CD4-positive, alpha-beta memory T cell (primary cell): ENCODE measurements at regions of chr14 and their contacts with region 1.

Region 1: GRCh38 chr14:23379366-23380196 is 2.7 kb downstream of the CMTM5 start:
- DNase-seq: peak; percentile 54 to 67 (median 65)
- H3K4me3 ChIP-seq: no peak overlapping the region
- H3K4me3 Mint-ChIP-seq: no peak overlapping the region
- H3K27ac ChIP-seq: no peak overlapping the region
- H3K27ac Mint-ChIP-seq: peak overlapping the region in 1 of 7 donors; percentile 4
- H3K4me1 ChIP-seq: no peaks in the 10 kb centered on the region
- H3K4me1 Mint-ChIP-seq: no peaks in the 10 kb centered on the region
- H3K27me3 ChIP-seq: no peaks in the 10 kb centered on the region
- H3K27me3 Mint-ChIP-seq: peaks cover 5 to 11% of the 10 kb centered on the region in 2 donors

Region 2: GRCh38 chr14:23047034-23047634 is 332.4 kb before region 1 on chr14:
- CTCF ChIA-PET with region 1: no interaction called
- POLR2A ChIA-PET with region 1: no interaction called
- intact Hi-C with region 1: no loop called
- DNase-seq: no peak
- H3K4me3 ChIP-seq: no peak overlapping the region
- H3K4me3 Mint-ChIP-seq: no peak overlapping the region
- H3K27ac ChIP-seq: no peak overlapping the region
- H3K27ac Mint-ChIP-seq: no peak overlapping the region
- H3K4me1 ChIP-seq: no peaks in the 10 kb centered on the region
- H3K4me1 Mint-ChIP-seq: no peaks in the 10 kb centered on the region
- H3K27me3 ChIP-seq: no peaks in the 10 kb centered on the region
- H3K27me3 Mint-ChIP-seq: no peaks in the 10 kb centered on the region

Region 3: GRCh38 chr14:23068476-23069412 is 310.8 kb before region 1 on chr14:
- CTCF ChIA-PET with region 1: interaction called, 5 read pairs
- POLR2A ChIA-PET with region 1: no interaction called
- intact Hi-C with region 1: loop called (anchors 2 kb)
- DNase-seq: peak; percentile 77 to 81 (median 78)
- H3K4me3 ChIP-seq: no peak overlapping the region
- H3K4me3 Mint-ChIP-seq: peak overlapping the region in 7 of 8 donors; percentile 34 to 74 (median 61)
- H3K27ac ChIP-seq: no peak overlapping the region
- H3K27ac Mint-ChIP-seq: peak overlapping the region; percentile 34 to 93 (median 87)
- H3K4me1 ChIP-seq: peaks cover 28% of the 10 kb centered on the region
- H3K4me1 Mint-ChIP-seq: peaks cover 19 to 41% (median 32%) of the 10 kb centered on the region in 4 donors
- H3K27me3 ChIP-seq: no peaks in the 10 kb centered on the region
- H3K27me3 Mint-ChIP-seq: no peaks in the 10 kb centered on the region

Region 4: GRCh38 chr14:23269193-23269592 is 110.4 kb before region 1 on chr14:
- CTCF ChIA-PET with region 1: interaction called, 36 read pairs
- POLR2A ChIA-PET with region 1: no interaction called
- intact Hi-C with region 1: no loop called
- DNase-seq: no peak
- H3K4me3 ChIP-seq: no peak overlapping the region
- H3K4me3 Mint-ChIP-seq: no peak overlapping the region
- H3K27ac ChIP-seq: no peak overlapping the region
- H3K27ac Mint-ChIP-seq: no peak overlapping the region
- H3K4me1 ChIP-seq: no peaks in the 10 kb centered on the region
- H3K4me1 Mint-ChIP-seq: no peaks in the 10 kb centered on the region
- H3K27me3 ChIP-seq: no peaks in the 10 kb centered on the region
- H3K27me3 Mint-ChIP-seq: peaks cover 1 to 7% of the 10 kb centered on the region in 2 donors

Region 5: GRCh38 chr14:23308721-23309445 is 70.7 kb before region 1 on chr14:
- CTCF ChIA-PET with region 1: no interaction called
- POLR2A ChIA-PET with region 1: no interaction called
- intact Hi-C with region 1: no loop called
- DNase-seq: no peak
- H3K4me3 ChIP-seq: no peak overlapping the region
- H3K4me3 Mint-ChIP-seq: no peak overlapping the region
- H3K27ac ChIP-seq: no peak overlapping the region
- H3K27ac Mint-ChIP-seq: peak overlapping the region in 1 of 7 donors; percentile 59
- H3K4me1 ChIP-seq: no peaks in the 10 kb centered on the region
- H3K4me1 Mint-ChIP-seq: no peaks in the 10 kb centered on the region
- H3K27me3 ChIP-seq: no peaks in the 10 kb centered on the region
- H3K27me3 Mint-ChIP-seq: peaks cover 17 to 33% of the 10 kb centered on the region in 2 donors

Region 6: GRCh38 chr14:23327947-23328744 is 51.4 kb before region 1 on chr14:
- CTCF ChIA-PET with region 1: interaction called, 25 read pairs
- POLR2A ChIA-PET with region 1: interaction called, 3 read pairs
- intact Hi-C with region 1: loop called (anchors 1 kb)
- DNase-seq: peak; percentile 48 to 64 (median 60)
- H3K4me3 ChIP-seq: no peak overlapping the region
- H3K4me3 Mint-ChIP-seq: no peak overlapping the region
- H3K27ac ChIP-seq: no peak overlapping the region
- H3K27ac Mint-ChIP-seq: peak overlapping the region in 2 of 7 donors; percentile 28 to 60
- H3K4me1 ChIP-seq: peaks cover 9% of the 10 kb centered on the region
- H3K4me1 Mint-ChIP-seq: peaks cover 3 to 8% (median 5%) of the 10 kb centered on the region in 4 donors
- H3K27me3 ChIP-seq: no peaks in the 10 kb centered on the region
- H3K27me3 Mint-ChIP-seq: peaks cover 0 to 2% of the 10 kb centered on the region in 2 donors

Region 7: GRCh38 chr14:23392613-23393012 is 13.0 kb after region 1 on chr14:
- CTCF ChIA-PET with region 1: interaction called, 11 read pairs
- POLR2A ChIA-PET with region 1: no interaction called
- intact Hi-C with region 1: no loop called
- DNase-seq: no peak
- H3K4me3 ChIP-seq: no peak overlapping the region
- H3K4me3 Mint-ChIP-seq: no peak overlapping the region
- H3K27ac ChIP-seq: no peak overlapping the region
- H3K27ac Mint-ChIP-seq: peak overlapping the region in 1 of 7 donors; percentile 44
- H3K4me1 ChIP-seq: no peaks in the 10 kb centered on the region
- H3K4me1 Mint-ChIP-seq: no peaks in the 10 kb centered on the region
- H3K27me3 ChIP-seq: no peaks in the 10 kb centered on the region
- H3K27me3 Mint-ChIP-seq: peaks cover 0 to 12% of the 10 kb centered on the region in 2 donors